ENCODE measurements at regions of chr1 and their contacts with region 1.

Region 1: GRCh38 chr1:39189592-39190041 is 14.9 kb upstream of the MACF1 start:
- DNase-seq: no peak
- ATAC-seq: no peak
- H3K4me3 Mint-ChIP-seq: no peak overlapping the region
- H3K27ac Mint-ChIP-seq: peak overlapping the region; percentile 84
- H3K4me1 Mint-ChIP-seq: peaks cover 81% of the 10 kb centered on the region
- H3K27me3 Mint-ChIP-seq: no peaks in the 10 kb centered on the region

Region 2: GRCh38 chr1:38941527-38942019 is 248.0 kb before region 1 on chr1 and contains the start of gene RHBDL2:
- CTCF ChIA-PET with region 1: no interaction called
- POLR2A ChIA-PET with region 1: no interaction called
- DNase-seq: no peak
- ATAC-seq: no peak
- H3K4me3 Mint-ChIP-seq: no peak within 1 kb of the TSS
- H3K27ac Mint-ChIP-seq: no peak within 1 kb of the TSS
- H3K4me1 Mint-ChIP-seq: no peaks in the 10 kb centered on the region
- H3K27me3 Mint-ChIP-seq: peaks cover 5% of the 10 kb centered on the region
- total RNA-seq, gene RHBDL2: not detected

Region 3: DNA sequence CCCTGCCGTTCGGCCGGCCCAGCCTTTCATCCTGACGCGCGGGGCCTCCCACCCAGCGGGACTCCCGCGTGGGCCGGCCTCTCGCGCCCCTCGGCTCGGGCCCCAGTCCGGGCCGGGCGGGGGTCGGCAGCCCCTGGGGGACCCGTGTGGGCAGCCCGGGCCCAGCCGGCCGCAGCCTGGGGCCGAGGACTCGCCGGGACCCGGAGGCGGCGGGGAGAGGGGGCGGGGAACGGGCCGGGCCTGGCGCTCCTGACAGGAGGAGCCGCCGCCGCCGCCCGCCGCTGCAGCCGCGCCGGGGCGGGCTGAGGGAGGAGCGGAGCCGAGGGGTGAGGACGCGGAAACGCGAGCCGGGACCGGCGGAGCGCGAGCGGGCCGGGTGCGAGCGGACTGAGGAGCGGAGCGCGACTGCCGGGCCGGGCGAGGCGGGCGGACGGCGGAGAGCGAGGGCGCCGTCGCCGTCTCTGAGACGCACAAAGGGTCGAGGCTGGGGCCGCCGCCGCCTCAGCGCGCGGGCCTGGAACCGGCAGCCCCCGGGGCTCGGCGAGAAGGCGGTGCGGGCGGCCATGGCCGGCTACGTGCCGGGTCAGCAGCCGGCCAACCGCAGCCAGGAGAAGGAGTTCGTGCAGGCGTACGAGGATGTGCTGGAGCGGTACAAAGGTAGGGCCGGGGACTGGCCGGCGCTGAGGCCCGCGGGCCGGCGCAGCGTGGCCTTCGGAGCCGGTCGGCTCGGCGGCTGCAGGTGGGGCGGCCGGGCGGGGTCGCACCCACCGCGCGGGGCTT is 84.4 kb before region 1 on chr1:
- CTCF ChIA-PET with region 1: interaction called, 283 read pairs
- POLR2A ChIA-PET with region 1: interaction called, 5 read pairs
- DNase-seq: peak; percentile 59
- ATAC-seq: peak; percentile 86
- H3K4me3 Mint-ChIP-seq: peak overlapping the region; percentile 78
- H3K27ac Mint-ChIP-seq: no peak overlapping the region
- H3K4me1 Mint-ChIP-seq: peaks cover 24% of the 10 kb centered on the region
- H3K27me3 Mint-ChIP-seq: peaks cover 7% of the 10 kb centered on the region

Region 4: DNA sequence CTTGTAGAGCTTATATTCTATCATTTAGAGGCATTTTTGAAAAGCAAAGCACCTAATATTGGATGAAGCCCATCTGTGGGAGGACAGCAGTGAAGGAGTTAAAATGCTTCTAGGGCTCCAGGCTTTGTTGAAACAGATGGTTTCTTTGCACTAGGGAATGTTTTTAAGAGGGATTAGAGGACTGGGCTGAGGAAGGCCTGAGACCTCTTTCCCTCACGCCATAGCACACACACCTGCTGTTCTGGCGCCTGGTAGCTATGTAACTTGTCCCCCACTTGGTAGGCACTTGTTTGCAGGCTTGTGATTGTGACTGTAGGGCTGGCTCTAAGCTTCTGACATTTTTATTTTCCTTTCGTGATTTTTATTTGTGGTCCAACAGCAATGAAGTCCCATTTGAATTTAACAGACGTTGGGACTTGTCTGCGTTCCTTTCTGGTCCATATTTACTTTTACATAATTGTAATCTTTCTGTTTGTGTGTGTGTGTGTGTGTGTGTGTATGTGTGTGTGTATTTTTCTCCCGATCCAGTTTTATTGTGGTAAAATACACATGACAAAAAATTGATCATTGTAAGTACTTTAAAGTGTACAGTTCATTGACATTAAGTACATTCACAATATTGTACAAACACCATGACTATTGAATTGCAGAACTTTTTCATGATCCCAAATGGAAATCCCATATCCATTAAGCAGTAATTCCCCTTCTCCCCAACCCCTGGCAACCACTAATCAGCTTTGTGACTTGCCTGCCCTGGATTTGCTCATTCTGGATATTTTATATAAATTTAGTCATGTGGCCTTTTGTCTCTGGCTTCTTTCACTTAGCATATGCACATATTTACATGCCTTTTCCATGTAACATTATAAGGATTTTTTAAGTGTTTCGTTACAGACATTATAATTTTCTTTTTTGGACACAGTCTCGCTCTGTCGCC is 18.6 kb before region 1 on chr1:
- CTCF ChIA-PET with region 1: interaction called, 18 read pairs
- POLR2A ChIA-PET with region 1: no interaction called
- DNase-seq: no peak
- ATAC-seq: no peak
- H3K4me3 Mint-ChIP-seq: no peak overlapping the region
- H3K27ac Mint-ChIP-seq: no peak overlapping the region
- H3K4me1 Mint-ChIP-seq: peaks cover 2% of the 10 kb centered on the region
- H3K27me3 Mint-ChIP-seq: no peaks in the 10 kb centered on the region

Region 5: DNA sequence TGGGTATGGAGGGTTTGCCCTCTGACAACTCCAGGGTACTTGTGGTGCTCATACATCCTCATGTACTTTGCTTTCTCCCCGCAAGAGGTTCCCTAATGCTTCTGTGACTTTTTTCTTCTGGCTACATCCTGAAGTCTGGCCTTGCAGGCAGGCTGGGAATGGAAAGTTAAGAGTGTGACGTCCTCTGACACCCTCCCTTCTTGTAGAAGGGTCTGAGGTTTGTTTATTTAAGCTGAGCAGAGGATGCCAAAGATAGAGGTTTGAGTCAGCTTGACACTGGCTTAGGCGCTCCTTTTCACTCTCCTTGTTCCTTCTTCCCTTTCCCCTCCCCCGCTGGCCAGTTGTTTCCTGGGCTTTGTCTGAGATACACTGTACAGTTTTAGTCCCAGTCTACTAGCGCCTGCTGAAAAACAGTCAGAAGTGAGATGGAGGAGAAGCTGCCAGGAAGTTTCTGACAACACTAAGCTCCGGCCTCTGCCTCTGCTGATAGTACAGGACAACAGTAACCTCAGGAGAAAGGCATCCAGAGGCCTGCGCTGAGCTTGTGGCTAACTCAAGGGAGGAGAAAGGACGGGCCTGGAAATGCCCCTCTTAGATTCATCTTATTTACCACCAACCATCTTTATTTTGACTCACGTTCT is 14.9 kb after region 1 on chr1 and contains the start of gene MACF1:
- CTCF ChIA-PET with region 1: interaction called, 540 read pairs
- POLR2A ChIA-PET with region 1: interaction called, 121 read pairs
- DNase-seq: peak; percentile 58
- ATAC-seq: peak; percentile 61
- H3K4me3 Mint-ChIP-seq: peak within 1 kb of the TSS; percentile 93
- H3K27ac Mint-ChIP-seq: peak within 1 kb of the TSS; percentile 93
- H3K4me1 Mint-ChIP-seq: peaks cover 53% of the 10 kb centered on the region
- H3K27me3 Mint-ChIP-seq: no peaks in the 10 kb centered on the region
- total RNA-seq, gene MACF1: 353 to 366 TPM

Region 6: GRCh38 chr1:39478126-39478915 is 288.7 kb after region 1 on chr1:
- CTCF ChIA-PET with region 1: no interaction called
- POLR2A ChIA-PET with region 1: no interaction called
- DNase-seq: no peak
- ATAC-seq: no peak
- H3K4me3 Mint-ChIP-seq: no peak overlapping the region
- H3K27ac Mint-ChIP-seq: peak overlapping the region; percentile 28
- H3K4me1 Mint-ChIP-seq: no peaks in the 10 kb centered on the region
- H3K27me3 Mint-ChIP-seq: no peaks in the 10 kb centered on the region